ENCODE measurements at regions of chr7 and their contacts with region 1.

Region 1: GRCh38 chr7:33128990-33129805 is at the start of gene BBS9:
- DNase-seq: peak; percentile 88
- H3K4me3 Mint-ChIP-seq: peak within 1 kb of the TSS; percentile 94
- H3K27ac Mint-ChIP-seq: peak within 1 kb of the TSS; percentile 87
- H3K4me1 Mint-ChIP-seq: peaks cover 20% of the 10 kb centered on the region
- H3K27me3 Mint-ChIP-seq: peaks cover 5% of the 10 kb centered on the region
- total RNA-seq, gene BBS9: 3.8 and 6.3 TPM in 2 replicates

Region 2: GRCh38 chr7:32490127-32490822 is 638.9 kb before region 1 on chr7 and contains the start of gene LSM5:
- intact Hi-C with region 1: loop called (anchors 1 kb)
- DNase-seq: peak; percentile 85
- H3K4me3 Mint-ChIP-seq: peak within 1 kb of the TSS; percentile 89
- H3K27ac Mint-ChIP-seq: peak within 1 kb of the TSS; percentile 91
- H3K4me1 Mint-ChIP-seq: peaks cover 24% of the 10 kb centered on the region
- H3K27me3 Mint-ChIP-seq: no peaks in the 10 kb centered on the region
- total RNA-seq, gene LSM5: 79.6 and 84.3 TPM in 2 replicates

Region 3: GRCh38 chr7:32495298-32496176 is 633.7 kb before region 1 on chr7 and contains the start of gene AVL9:
- intact Hi-C with region 1: loop called (anchors 1 kb)
- DNase-seq: peak; percentile 99
- H3K4me3 Mint-ChIP-seq: peak within 1 kb of the TSS; percentile 93
- H3K27ac Mint-ChIP-seq: peak within 1 kb of the TSS; percentile 98
- H3K4me1 Mint-ChIP-seq: peaks cover 32% of the 10 kb centered on the region
- H3K27me3 Mint-ChIP-seq: no peaks in the 10 kb centered on the region
- total RNA-seq, gene AVL9: 46.7 and 50.6 TPM in 2 replicates

Region 4: GRCh38 chr7:32942786-32943653 is 186.2 kb before region 1 on chr7:
- intact Hi-C with region 1: loop called (anchors 1 kb)
- DNase-seq: peak; percentile 65
- H3K4me3 Mint-ChIP-seq: peak overlapping the region; percentile 91
- H3K27ac Mint-ChIP-seq: peak overlapping the region; percentile 76
- H3K4me1 Mint-ChIP-seq: peaks cover 29% of the 10 kb centered on the region
- H3K27me3 Mint-ChIP-seq: peaks cover 10% of the 10 kb centered on the region

Region 5: GRCh38 chr7:33040803-33041516 is 88.2 kb before region 1 on chr7:
- intact Hi-C with region 1: loop called (anchors 1 kb)
- DNase-seq: peak; percentile 67
- H3K4me3 Mint-ChIP-seq: peak overlapping the region; percentile 80
- H3K27ac Mint-ChIP-seq: peak overlapping the region; percentile 73
- H3K4me1 Mint-ChIP-seq: peaks cover 65% of the 10 kb centered on the region
- H3K27me3 Mint-ChIP-seq: no peaks in the 10 kb centered on the region